ENCODE measurements at regions of chr6 and their contacts with region 1.

Region 1: GRCh38 chr6:119620846-119621555 is 271.4 kb upstream of the MAN1A1 start:
- DNase-seq: no peak
- H3K4me3 ChIP-seq: no peak overlapping the region
- H3K27ac ChIP-seq: no peak overlapping the region
- H3K4me1 ChIP-seq: no peaks in the 10 kb centered on the region
- H3K27me3 ChIP-seq: no peaks in the 10 kb centered on the region
- CTCF ChIP-seq: no peak
- POLR2A ChIP-seq: no peak

Region 2: GRCh38 chr6:119162134-119162775 is 458.7 kb before region 1 on chr6:
- intact Hi-C with region 1: loop called (anchors 5 kb)
- DNase-seq: no peak
- H3K4me3 ChIP-seq: no peak overlapping the region
- H3K27ac ChIP-seq: no peak overlapping the region
- H3K4me1 ChIP-seq: no peaks in the 10 kb centered on the region
- H3K27me3 ChIP-seq: no peaks in the 10 kb centered on the region
- CTCF ChIP-seq: no peak
- POLR2A ChIP-seq: no peak

Measured in testis (tissue), 5 donors.